ENCODE measurements at regions of chr19 and their contacts with region 1.

Region 1: DNA sequence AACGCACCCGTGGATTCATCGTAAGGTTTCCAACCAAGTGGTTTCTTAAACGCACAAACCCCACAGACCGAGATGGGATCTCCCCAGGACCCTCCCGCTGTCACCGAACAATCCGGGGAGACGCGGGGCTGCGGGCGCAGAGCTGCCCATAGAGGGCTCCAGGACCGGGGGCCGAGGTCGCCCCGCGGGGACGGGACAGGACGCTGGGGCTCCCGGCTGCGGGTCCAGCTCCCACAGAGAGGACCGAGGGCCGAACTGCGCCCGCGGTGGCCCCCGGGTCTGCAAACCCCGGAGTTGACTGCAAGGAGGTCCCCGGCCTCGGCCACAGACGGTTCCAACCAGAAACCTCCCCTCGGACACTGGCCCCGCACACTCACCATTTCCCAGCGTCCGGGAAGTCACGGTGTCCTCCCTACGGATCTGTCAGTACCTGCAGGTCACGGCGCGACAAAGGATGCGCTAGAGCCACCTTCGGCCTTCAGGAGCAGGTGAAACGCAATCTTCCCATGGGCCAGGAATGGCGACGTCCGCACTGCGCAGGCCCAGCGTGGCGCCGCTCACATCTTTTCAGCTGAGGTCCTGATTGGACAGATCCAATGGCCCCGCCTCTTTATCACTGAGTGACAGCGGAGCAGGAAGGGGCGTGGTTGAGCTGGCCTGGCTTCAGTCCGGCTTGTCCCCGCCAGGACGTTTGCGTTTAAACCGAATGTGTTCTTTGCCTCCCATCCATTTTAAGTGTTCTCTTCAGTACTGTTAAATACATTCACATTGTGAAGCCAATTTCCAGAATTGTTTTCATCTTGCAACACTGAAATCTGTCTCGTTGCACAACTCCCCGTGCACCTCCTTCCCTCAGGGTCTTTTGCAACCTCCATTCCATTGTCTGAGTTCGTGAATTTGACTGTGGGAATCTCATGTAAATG is at the start of gene ZNF14:
- DNase-seq: peak; percentile 96
- H3K4me3 Mint-ChIP-seq: peak within 1 kb of the TSS; percentile 99
- H3K27ac Mint-ChIP-seq: peak within 1 kb of the TSS; percentile 94
- H3K4me1 Mint-ChIP-seq: peaks cover 17% of the 10 kb centered on the region
- H3K27me3 Mint-ChIP-seq: no peaks in the 10 kb centered on the region
- total RNA-seq, gene ZNF14: 6.8 to 7.9 TPM

Region 2: GRCh38 chr19:19696386-19696785 is 36.5 kb before region 1 on chr19:
- CTCF ChIA-PET with region 1: no interaction called
- POLR2A ChIA-PET with region 1: no interaction called
- intact Hi-C with region 1: no loop called
- DNase-seq: no peak
- H3K4me3 Mint-ChIP-seq: no peak overlapping the region
- H3K27ac Mint-ChIP-seq: no peak overlapping the region
- H3K4me1 Mint-ChIP-seq: no peaks in the 10 kb centered on the region
- H3K27me3 Mint-ChIP-seq: no peaks in the 10 kb centered on the region

Region 3: GRCh38 chr19:19776041-19777008 is 43.5 kb after region 1 on chr19:
- CTCF ChIA-PET with region 1: interaction called, 3 read pairs
- POLR2A ChIA-PET with region 1: interaction called, 10 read pairs
- intact Hi-C with region 1: loop called (anchors 1 kb)
- DNase-seq: peak; percentile 96
- H3K4me3 Mint-ChIP-seq: peak overlapping the region; percentile 97
- H3K27ac Mint-ChIP-seq: peak overlapping the region; percentile 93
- H3K4me1 Mint-ChIP-seq: peaks cover 44% of the 10 kb centered on the region
- H3K27me3 Mint-ChIP-seq: no peaks in the 10 kb centered on the region

Region 4: DNA sequence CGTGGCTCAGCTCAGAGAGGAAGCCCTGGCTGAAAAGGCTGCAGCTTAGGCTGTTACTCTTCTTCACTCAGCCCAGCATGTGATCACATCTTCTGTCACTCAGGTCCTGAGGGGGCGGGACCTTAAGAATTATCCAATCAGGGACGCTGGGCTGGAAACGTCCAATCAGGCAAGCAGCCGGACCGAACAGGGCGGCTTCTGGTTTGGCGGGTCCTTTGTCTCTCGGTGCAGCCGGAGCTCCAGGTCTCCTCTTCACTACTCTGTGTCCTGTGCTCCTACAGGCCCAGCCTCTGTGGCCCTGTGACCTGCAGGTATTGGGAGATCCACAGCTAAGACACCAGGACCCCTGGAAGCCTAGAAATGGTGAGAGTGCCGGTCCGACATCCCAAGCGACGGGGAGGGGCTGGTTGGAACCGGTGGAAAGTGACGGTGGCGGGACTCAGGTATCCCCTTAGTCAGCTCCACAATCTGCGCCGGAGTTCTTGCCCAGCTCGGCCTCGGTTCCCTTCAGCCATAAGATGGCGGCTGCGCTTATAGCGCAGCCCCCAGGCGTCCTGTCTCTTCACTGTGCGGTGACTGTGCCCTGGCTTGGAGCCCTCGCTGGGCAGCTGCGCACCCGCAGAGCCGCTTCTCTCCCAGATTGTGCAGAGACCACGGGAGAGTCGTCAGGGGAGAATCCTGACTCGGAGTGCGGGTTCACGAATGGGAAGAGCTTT is 168.0 kb after region 1 on chr19 and contains the start of gene ZNF93:
- CTCF ChIA-PET with region 1: no interaction called
- POLR2A ChIA-PET with region 1: interaction called, 3 read pairs
- intact Hi-C with region 1: loop called (anchors 2 kb)
- DNase-seq: peak; percentile 96
- H3K4me3 Mint-ChIP-seq: peak within 1 kb of the TSS; percentile 98
- H3K27ac Mint-ChIP-seq: peak within 1 kb of the TSS; percentile 96
- H3K4me1 Mint-ChIP-seq: peaks cover 35% of the 10 kb centered on the region
- H3K27me3 Mint-ChIP-seq: no peaks in the 10 kb centered on the region
- total RNA-seq, gene ZNF93: 15.6 to 17.0 TPM

Measured in activated CD4-positive, alpha-beta memory T cell treated with anti-CD3 and anti-CD28 coated beads for 36 hours (primary cell).